CD4-positive, alpha-beta T cell (primary cell): ENCODE measurements at regions of chr10 and their contacts with region 1.

Region 1: DNA sequence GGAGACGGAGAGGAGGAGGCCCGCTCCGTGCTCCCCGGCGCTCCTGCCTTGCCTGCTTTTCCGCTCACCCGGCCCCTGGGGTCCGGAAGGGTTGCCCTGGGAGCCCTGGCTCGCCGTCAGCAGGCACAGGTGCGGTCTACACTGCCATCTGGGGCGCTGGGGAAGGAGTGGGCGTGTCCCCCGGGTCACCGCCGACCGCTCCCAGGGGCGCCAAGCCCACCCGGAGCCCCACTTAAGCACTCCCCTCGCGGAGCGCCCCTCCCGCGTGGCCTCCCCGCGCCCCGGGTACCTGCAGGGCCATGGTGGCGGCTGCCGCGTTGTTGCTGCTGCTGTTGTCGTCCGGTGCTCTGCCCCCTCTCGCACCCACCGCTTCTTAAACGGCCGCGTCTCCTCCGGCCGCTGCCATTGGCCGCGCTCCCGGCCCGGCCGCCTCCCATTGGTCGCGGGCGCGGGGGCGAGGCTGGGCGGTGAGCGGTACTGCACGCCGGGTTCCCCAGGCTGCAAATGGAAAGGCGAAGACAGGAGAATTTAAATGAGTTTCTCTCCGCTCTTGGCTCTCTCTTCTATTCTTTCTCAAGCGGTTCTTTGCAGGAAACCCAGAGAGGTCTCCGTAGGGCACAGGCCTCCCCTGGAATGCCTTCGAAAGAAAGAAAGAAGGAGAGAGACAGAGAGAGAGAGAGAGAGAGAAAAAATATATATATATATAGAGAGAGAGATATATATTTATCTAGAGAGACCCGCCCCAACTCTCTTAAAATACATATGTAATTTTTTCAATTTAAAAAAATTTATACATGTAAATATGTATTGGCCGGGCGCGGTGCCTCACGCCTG is at the start of gene ACBD7:
- DNase-seq: peak; percentile 60 to 90 (median 72)
- ATAC-seq: peak; percentile 83
- H3K4me3 ChIP-seq: peak within 1 kb of the TSS; percentile 55
- H3K4me3 Mint-ChIP-seq: peak within 1 kb of the TSS; percentile 81
- H3K27ac ChIP-seq: no peak within 1 kb of the TSS
- H3K27ac Mint-ChIP-seq: no peak within 1 kb of the TSS
- H3K4me1 ChIP-seq: peaks cover 13% of the 10 kb centered on the region
- H3K4me1 Mint-ChIP-seq: peaks cover 21% of the 10 kb centered on the region
- H3K27me3 ChIP-seq: no peaks in the 10 kb centered on the region
- H3K27me3 Mint-ChIP-seq: no peaks in the 10 kb centered on the region
- CTCF ChIP-seq: peak; percentile 58
- total RNA-seq, gene ACBD7: 0.19 to 0.47 TPM

Region 2: GRCh38 chr10:14191871-14192270 is 896.8 kb before region 1 on chr10:
- CTCF ChIA-PET with region 1: no interaction called
- POLR2A ChIA-PET with region 1: no interaction called
- intact Hi-C with region 1: loop called in 1 of 2 experiments (anchors 10 kb)
- DNase-seq: no peak
- ATAC-seq: no peak
- H3K4me3 ChIP-seq: no peak overlapping the region
- H3K4me3 Mint-ChIP-seq: no peak overlapping the region
- H3K27ac ChIP-seq: no peak overlapping the region
- H3K27ac Mint-ChIP-seq: no peak overlapping the region
- H3K4me1 ChIP-seq: no peaks in the 10 kb centered on the region
- H3K4me1 Mint-ChIP-seq: no peaks in the 10 kb centered on the region
- H3K27me3 ChIP-seq: peaks cover 2 to 9% of the 10 kb centered on the region in 2 experiments
- H3K27me3 Mint-ChIP-seq: peaks cover 19% of the 10 kb centered on the region
- CTCF ChIP-seq: no peak

Region 3: GRCh38 chr10:14995964-14996565 is 92.6 kb before region 1 on chr10:
- CTCF ChIA-PET with region 1: no interaction called
- POLR2A ChIA-PET with region 1: no interaction called
- intact Hi-C with region 1: loop called in 1 of 2 experiments (anchors 5 kb)
- DNase-seq: no peak
- ATAC-seq: no peak
- H3K4me3 ChIP-seq: no peak overlapping the region
- H3K4me3 Mint-ChIP-seq: no peak overlapping the region
- H3K27ac ChIP-seq: no peak overlapping the region
- H3K27ac Mint-ChIP-seq: no peak overlapping the region
- H3K4me1 ChIP-seq: no peaks in the 10 kb centered on the region
- H3K4me1 Mint-ChIP-seq: peaks cover 8% of the 10 kb centered on the region
- H3K27me3 ChIP-seq: no peaks in the 10 kb centered on the region
- H3K27me3 Mint-ChIP-seq: peaks cover 2% of the 10 kb centered on the region
- CTCF ChIP-seq: no peak

Region 4: GRCh38 chr10:15112657-15113056 is 24.0 kb after region 1 on chr10:
- CTCF ChIA-PET with region 1: no interaction called
- POLR2A ChIA-PET with region 1: no interaction called
- intact Hi-C with region 1: no loop called
- DNase-seq: no peak
- ATAC-seq: peak; percentile 73
- H3K4me3 ChIP-seq: no peak overlapping the region
- H3K4me3 Mint-ChIP-seq: no peak overlapping the region
- H3K27ac ChIP-seq: no peak overlapping the region
- H3K27ac Mint-ChIP-seq: peak overlapping the region; percentile 75
- H3K4me1 ChIP-seq: no peaks in the 10 kb centered on the region
- H3K4me1 Mint-ChIP-seq: peaks cover 9% of the 10 kb centered on the region
- H3K27me3 ChIP-seq: no peaks in the 10 kb centered on the region
- H3K27me3 Mint-ChIP-seq: no peaks in the 10 kb centered on the region
- CTCF ChIP-seq: no peak